Common myeloid progenitor, CD34-positive (primary cell): ENCODE measurements at regions of chr2 and their contacts with region 1.

Region 1: GRCh38 chr2:213125646-213126347 is 25.6 kb downstream of the IKZF2 start:
- DNase-seq: peak in 2 of 3 donors; percentile 35 to 49
- H3K4me3 ChIP-seq: no peak overlapping the region
- H3K27ac ChIP-seq: no peak overlapping the region
- H3K4me1 ChIP-seq: peaks cover 9 to 35% (median 15%) of the 10 kb centered on the region in 4 experiments
- H3K27me3 ChIP-seq: no peaks in the 10 kb centered on the region

Region 2: DNA sequence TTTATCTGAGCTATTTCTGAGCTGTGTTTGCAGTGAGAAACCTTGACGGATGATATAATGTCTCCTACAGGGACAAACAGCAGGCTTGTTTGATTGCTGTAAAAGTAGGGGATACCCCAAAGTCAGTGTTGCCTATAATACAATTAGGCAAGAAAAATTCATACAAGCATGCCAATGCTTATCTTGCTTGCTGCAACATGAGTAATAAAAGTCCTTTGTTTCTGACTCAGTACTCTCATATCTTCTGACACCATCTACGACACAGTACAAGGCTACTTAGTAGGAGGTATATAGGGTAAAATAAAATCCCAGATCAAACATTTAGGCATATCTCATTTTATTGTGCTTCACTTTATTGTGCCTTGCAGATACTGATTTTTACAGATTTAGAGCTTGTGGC is 620.2 kb before region 1 on chr2:
- CTCF ChIA-PET with region 1: no interaction called
- POLR2A ChIA-PET with region 1: no interaction called
- DNase-seq: no peak
- H3K4me3 ChIP-seq: no peak overlapping the region
- H3K27ac ChIP-seq: no peak overlapping the region
- H3K4me1 ChIP-seq: no peaks in the 10 kb centered on the region
- H3K27me3 ChIP-seq: peaks cover 0 to 5% (median 0%) of the 10 kb centered on the region in 5 experiments

Region 3: GRCh38 chr2:212777020-212777491 is 348.7 kb before region 1 on chr2:
- CTCF ChIA-PET with region 1: interaction called, 16 read pairs
- POLR2A ChIA-PET with region 1: no interaction called
- DNase-seq: peak; percentile 37 to 65 (median 56)
- H3K4me3 ChIP-seq: no peak overlapping the region
- H3K27ac ChIP-seq: no peak overlapping the region
- H3K4me1 ChIP-seq: peaks cover 0 to 5% (median 1%) of the 10 kb centered on the region in 4 experiments
- H3K27me3 ChIP-seq: no peaks in the 10 kb centered on the region

Region 4: DNA sequence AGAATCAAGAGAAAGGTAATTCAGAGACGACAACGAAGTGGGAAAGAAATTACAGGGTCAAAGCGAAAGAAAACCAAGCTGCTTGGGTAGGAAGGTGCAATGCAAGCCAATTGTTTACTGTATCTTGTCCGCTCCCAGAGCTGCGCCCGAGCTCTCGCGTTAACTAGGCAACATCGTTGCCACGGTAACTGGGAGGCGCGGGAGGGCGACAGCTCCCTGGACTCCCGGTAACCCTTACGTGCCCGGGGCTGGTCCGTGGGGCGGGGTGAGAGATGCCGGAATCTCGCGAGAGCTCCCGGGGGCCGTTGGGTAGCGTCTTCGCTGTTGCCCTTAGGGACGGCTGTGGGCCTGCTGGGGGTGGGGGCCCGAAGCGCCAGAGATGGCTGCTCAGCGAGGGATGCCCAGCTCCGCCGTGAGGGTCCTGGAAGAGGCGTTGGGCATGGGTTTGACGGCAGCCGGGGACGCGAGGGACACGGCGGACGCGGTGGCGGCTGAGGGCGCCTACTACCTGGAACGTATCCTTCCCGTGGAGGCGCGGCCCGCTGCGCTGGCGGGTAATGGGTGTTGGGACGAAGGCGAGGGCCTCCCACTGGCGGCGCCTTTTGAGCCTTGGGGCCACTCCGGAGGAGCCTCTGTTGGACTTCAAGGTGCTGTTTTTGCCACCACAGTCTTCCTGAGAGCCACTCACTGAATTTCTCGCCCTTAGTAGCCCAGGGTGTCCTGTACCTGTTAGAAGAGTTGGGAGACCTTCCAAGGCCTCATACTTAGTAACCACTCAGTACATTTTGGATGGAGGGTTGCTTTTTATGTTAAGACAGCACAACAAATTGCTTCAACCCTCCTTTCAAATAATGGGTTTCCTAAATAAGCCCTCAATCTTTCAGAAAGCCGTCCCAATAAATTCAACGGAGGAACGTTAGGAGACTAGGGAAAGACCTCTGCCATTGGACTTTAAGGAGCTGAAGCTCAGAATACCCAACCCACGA is 158.6 kb after region 1 on chr2 and contains the start of gene SPAG16:
- CTCF ChIA-PET with region 1: no interaction called
- POLR2A ChIA-PET with region 1: no interaction called
- DNase-seq: peak; percentile 97 to 98 (median 98)
- H3K4me3 ChIP-seq: peak within 1 kb of the TSS; percentile 46 to 98 (median 92)
- H3K27ac ChIP-seq: peak within 1 kb of the TSS; percentile 87 to 89
- H3K4me1 ChIP-seq: peaks cover 9 to 13% (median 11%) of the 10 kb centered on the region in 4 experiments
- H3K27me3 ChIP-seq: no peaks in the 10 kb centered on the region

Region 5: DNA sequence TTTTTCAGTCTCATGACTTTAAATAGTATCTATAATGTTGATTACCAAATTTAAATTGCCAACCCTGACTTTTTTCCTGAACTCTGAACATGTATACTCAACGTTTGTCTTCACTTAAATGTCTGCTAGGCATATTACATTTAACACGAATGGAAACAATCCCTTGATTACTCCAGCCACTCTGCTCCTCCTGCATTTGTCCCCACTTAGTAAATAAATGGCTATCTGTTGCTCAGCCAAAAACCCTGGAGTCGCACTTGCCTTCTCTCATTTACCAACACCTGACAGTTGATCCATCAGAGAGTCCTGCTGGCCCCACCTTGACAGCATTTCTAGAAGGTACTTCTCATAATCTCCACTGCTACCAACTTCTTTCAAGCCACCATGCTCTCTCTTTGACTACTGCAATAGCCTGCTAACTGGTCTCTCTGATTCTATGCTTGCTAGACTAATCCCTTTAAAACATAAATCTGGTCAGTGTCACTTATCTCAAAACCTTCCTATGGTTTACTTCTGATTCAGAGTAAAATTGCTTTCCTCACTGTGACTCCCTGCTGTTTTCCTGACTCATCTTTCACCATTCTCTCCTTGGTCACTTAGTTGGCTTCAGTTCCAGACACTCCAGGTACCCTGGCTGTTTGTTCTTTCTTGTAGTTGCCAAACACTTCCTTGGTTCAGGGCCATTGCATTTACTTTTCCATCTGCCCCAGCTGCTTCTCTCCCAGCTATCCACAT is 190.4 kb after region 1 on chr2:
- CTCF ChIA-PET with region 1: no interaction called
- POLR2A ChIA-PET with region 1: no interaction called
- DNase-seq: no peak
- H3K4me3 ChIP-seq: no peak overlapping the region
- H3K27ac ChIP-seq: no peak overlapping the region
- H3K4me1 ChIP-seq: peaks cover 0 to 5% (median 0%) of the 10 kb centered on the region in 4 experiments
- H3K27me3 ChIP-seq: no peaks in the 10 kb centered on the region